Heart left ventricle (tissue), 16 donors: ENCODE measurements at regions of chr3 and their contacts with region 1.

Region 1: DNA sequence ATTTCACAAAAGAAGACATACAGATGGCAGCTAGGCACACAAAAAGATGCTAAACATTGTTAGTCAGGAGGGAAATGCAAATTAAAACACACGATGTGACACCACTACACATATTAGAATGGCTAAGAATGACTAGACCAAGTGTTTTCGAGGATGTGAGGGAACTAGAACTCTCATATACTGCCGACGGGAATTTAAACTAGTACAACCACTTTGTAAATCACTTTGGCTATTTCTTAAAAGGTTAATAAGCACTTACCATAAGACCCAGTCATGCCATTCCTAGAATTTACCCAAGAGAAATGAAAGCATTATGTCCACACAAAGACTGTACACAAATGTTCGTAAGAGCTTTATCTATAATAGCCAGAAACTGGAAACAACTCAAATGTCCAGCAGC is 5.6 kb downstream of the CEP70 start:
- DNase-seq: no peak
- ATAC-seq: no peak
- H3K4me3 ChIP-seq: no peak overlapping the region
- H3K27ac ChIP-seq: no peak overlapping the region
- H3K4me1 ChIP-seq: peaks cover 0 to 9% (median 6%) of the 10 kb centered on the region in 12 donors
- H3K27me3 ChIP-seq: no peaks in the 10 kb centered on the region
- CTCF ChIP-seq: no peak
- POLR2A ChIP-seq: no peak

Region 2: DNA sequence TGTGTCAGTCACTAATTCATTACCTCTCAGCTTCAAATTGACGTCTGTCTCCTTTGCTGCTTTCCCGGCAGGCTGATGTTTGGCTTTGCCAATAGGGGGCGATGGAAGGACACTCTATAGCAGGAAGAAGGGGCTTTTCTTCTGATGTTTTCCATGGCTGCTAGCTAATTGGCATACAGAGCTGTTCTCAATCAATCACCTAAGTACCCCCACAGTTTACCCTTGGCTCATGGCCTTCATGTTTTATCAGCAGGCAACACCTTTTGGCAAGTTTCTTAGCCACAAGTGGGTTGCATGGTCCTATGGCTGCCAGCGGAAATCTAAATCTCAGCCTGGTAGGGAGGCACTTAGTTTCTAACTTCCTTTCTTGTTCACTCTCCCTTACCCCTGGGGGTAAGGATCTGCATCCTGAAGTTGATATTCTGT is 109.0 kb before region 1 on chr3:
- intact Hi-C with region 1: loop called in 2 of 10 experiments (anchors 10 kb)
- DNase-seq: no peak
- ATAC-seq: peak in 3 of 4 donors; percentile 32 to 67 (median 45)
- H3K4me3 ChIP-seq: no peak overlapping the region
- H3K27ac ChIP-seq: no peak overlapping the region
- H3K4me1 ChIP-seq: peaks cover 0 to 4% (median 0%) of the 10 kb centered on the region in 12 donors
- H3K27me3 ChIP-seq: no peaks in the 10 kb centered on the region
- CTCF ChIP-seq: peak; percentile 28 to 67 (median 56)
- POLR2A ChIP-seq: no peak